ENCODE measurements at regions of chr6 and their contacts with region 1.

Region 1: GRCh38 chr6:85493389-85493788 is 43.5 kb downstream of the NT5E start:
- DNase-seq: no peak
- H3K4me3 Mint-ChIP-seq: no peak overlapping the region
- H3K27ac Mint-ChIP-seq: no peak overlapping the region
- H3K4me1 Mint-ChIP-seq: peaks cover 35% of the 10 kb centered on the region
- H3K27me3 Mint-ChIP-seq: no peaks in the 10 kb centered on the region
- CTCF ChIP-seq: no peak

Region 2: DNA sequence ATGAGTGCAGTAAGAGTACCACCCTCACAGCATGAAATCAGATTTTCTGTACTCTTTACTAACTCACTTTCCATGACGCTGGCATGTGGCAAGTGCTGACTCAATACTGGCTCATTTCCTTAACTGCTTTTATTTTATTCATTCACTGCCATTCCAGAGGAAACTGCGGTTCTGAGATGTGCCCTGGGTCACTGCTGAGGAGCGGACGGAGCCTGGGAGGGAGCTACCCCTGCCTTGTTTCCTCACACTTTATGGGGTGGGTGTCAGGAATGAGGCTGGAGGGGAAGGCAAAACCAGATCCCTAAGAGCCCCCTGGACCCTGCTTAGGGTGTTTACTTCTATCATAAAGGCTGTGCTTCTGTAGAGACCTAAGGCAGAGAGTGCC is 29.1 kb before region 1 on chr6:
- CTCF ChIA-PET with region 1: no interaction called
- intact Hi-C with region 1: no loop called
- DNase-seq: peak; percentile 67
- H3K4me3 Mint-ChIP-seq: peak overlapping the region; percentile 20
- H3K27ac Mint-ChIP-seq: peak overlapping the region; percentile 87
- H3K4me1 Mint-ChIP-seq: peaks cover 76% of the 10 kb centered on the region
- H3K27me3 Mint-ChIP-seq: no peaks in the 10 kb centered on the region
- CTCF ChIP-seq: no peak

Region 3: GRCh38 chr6:85574932-85575598 is 81.7 kb after region 1 on chr6:
- CTCF ChIA-PET with region 1: no interaction called
- intact Hi-C with region 1: no loop called
- DNase-seq: peak; percentile 4
- H3K4me3 Mint-ChIP-seq: no peak overlapping the region
- H3K27ac Mint-ChIP-seq: peak overlapping the region; percentile 6
- H3K4me1 Mint-ChIP-seq: peaks cover 4% of the 10 kb centered on the region
- H3K27me3 Mint-ChIP-seq: no peaks in the 10 kb centered on the region
- CTCF ChIP-seq: no peak

Region 4: GRCh38 chr6:85602100-85602499 is 108.7 kb after region 1 on chr6:
- CTCF ChIA-PET with region 1: interaction called, 12 read pairs
- intact Hi-C with region 1: no loop called
- DNase-seq: no peak
- H3K4me3 Mint-ChIP-seq: no peak overlapping the region
- H3K27ac Mint-ChIP-seq: no peak overlapping the region
- H3K4me1 Mint-ChIP-seq: peaks cover 9% of the 10 kb centered on the region
- H3K27me3 Mint-ChIP-seq: no peaks in the 10 kb centered on the region
- CTCF ChIP-seq: no peak

Measured in Calu3 (cell line).